GM10248 (cell line): ENCODE measurements at regions of chr15 and their contacts with region 1.

Region 1: DNA sequence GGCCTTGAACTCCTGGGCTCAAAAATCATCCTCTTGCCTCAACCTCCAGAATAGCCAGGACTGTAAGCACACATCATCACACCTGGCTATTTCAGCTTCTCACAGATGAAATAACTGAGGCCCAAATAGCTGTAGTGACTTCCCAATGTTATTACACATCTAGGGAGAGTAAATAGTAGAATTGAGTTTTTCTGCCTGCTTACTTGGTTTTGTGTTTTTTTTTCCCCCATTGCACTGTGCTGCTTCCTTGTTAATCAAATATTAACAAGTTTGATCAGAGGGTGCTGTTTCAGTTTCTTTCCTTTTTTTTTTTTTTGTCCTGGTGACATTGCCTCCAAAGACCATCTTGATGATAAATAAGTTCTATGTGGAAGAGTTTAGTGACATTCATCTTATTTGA is 23.4 kb downstream of the ZNF609 start:
- DNase-seq: no peak
- CTCF ChIP-seq: no peak

Region 2: GRCh38 chr15:64515196-64515595 is 31.4 kb after region 1 on chr15:
- CTCF ChIA-PET with region 1: no interaction called
- POLR2A ChIA-PET with region 1: interaction called, 12 read pairs
- DNase-seq: no peak
- CTCF ChIP-seq: no peak